ENCODE measurements at regions of chr4 and their contacts with region 1.

Region 1: GRCh38 chr4:151581570-151581969 is 172.6 kb downstream of the FHIP1A start:
- DNase-seq: no peak
- H3K27ac ChIP-seq: no peak overlapping the region
- CTCF ChIP-seq: no peak

Region 2: DNA sequence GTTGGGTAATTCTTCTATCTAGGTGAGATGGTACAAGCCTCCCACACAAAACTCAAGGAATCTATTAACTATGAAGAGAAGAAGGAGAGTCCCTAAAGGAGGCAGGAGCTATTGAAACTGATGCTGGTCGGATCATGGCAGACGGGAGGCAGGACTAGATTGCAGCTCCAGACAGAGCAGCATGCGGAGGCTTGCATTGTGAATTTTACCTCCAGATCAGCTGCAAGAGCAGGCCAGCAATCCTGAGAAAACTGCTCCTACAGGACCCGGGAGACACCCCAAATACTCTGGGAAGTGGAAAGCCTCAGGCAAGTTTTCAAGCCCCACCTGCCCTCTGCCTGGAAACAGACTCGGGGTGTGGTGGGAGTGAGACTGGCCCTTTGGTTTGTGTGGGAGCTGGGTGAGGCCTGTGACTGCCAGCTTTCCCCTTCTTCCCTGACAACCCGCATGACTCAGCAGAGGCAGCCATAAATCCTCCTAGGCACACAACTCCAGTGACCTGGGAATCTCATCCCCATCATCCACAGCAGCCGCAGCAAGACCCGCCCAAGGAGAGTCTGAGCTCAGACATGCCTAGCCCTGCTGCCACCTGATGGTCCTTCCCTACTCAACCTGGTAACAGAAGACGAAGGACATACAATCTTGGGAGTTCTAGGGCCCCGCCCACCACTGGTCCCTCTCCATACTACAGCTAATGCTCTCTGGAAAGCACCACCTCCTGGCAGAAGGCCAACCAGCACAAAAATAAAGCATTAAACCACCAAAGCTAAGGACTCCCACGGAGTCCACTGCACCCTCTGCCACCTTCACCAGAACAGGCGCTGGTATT is 148.4 kb after region 1 on chr4:
- CTCF ChIA-PET with region 1: no interaction called
- POLR2A ChIA-PET with region 1: no interaction called
- DNase-seq: peak; percentile 67
- H3K27ac ChIP-seq: peak overlapping the region; percentile 98
- CTCF ChIP-seq: no peak

Region 3: GRCh38 chr4:152065545-152065944 is 484.0 kb after region 1 on chr4:
- CTCF ChIA-PET with region 1: interaction called, 10 read pairs
- POLR2A ChIA-PET with region 1: no interaction called
- DNase-seq: no peak
- H3K27ac ChIP-seq: no peak overlapping the region
- CTCF ChIP-seq: no peak

Measured in RWPE1 (cell line).